ENCODE measurements at regions of chr2 and their contacts with region 1.

Region 1: GRCh38 chr2:88669371-88670214 is 21.9 kb upstream of the RPIA start:
- DNase-seq: peak in 4 of 9 experiments; percentile 12 to 63 (median 34)
- ATAC-seq: peak; percentile 75
- H3K4me3 ChIP-seq: no peak overlapping the region
- H3K4me3 Mint-ChIP-seq: no peak overlapping the region
- H3K27ac ChIP-seq: no peak overlapping the region
- H3K27ac Mint-ChIP-seq: no peak overlapping the region
- H3K4me1 ChIP-seq: no peaks in the 10 kb centered on the region
- H3K4me1 Mint-ChIP-seq: no peaks in the 10 kb centered on the region
- H3K27me3 ChIP-seq: no peaks in the 10 kb centered on the region
- H3K27me3 Mint-ChIP-seq: no peaks in the 10 kb centered on the region
- CTCF ChIP-seq: peak; percentile 40

Region 2: DNA sequence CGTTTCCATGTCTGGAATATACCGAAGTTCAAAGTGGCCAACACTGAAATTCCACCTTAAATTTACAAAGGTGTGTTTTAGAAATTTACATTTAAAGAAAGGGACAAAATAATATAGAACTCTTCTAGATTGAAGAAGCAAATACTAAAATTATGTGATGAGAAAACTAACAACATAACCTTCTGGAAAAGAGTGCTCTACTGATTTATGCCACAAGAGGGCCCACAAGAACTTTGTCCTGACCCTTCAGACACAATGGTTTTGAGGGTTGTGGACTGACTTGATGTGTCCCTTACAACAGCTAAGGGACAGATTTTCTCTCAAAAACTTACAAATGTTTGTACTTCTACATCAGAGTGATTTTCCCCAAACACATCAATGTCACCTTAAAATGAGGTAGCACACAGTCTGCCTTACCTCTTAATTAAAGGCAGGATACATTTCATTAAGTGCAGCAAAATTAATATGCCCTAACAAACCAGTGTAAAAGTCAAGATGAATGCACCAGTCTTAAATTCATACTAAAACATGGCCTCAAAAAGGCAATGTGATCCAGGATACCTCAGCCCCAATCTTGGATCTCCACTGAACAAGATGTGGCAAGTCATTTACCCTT is 78.5 kb before region 1 on chr2:
- CTCF ChIA-PET with region 1: interaction called, 153 read pairs
- POLR2A ChIA-PET with region 1: no interaction called
- intact Hi-C with region 1: loop called (anchors 1 kb)
- DNase-seq: peak in 7 of 9 experiments; percentile 5 to 73 (median 38)
- ATAC-seq: peak; percentile 90
- H3K4me3 ChIP-seq: no peak overlapping the region
- H3K4me3 Mint-ChIP-seq: no peak overlapping the region
- H3K27ac ChIP-seq: no peak overlapping the region
- H3K27ac Mint-ChIP-seq: no peak overlapping the region
- H3K4me1 ChIP-seq: no peaks in the 10 kb centered on the region
- H3K4me1 Mint-ChIP-seq: peaks cover 4% of the 10 kb centered on the region
- H3K27me3 ChIP-seq: no peaks in the 10 kb centered on the region
- H3K27me3 Mint-ChIP-seq: no peaks in the 10 kb centered on the region
- CTCF ChIP-seq: peak; percentile 73

Region 3: GRCh38 chr2:88659538-88659916 is 10.1 kb before region 1 on chr2:
- CTCF ChIA-PET with region 1: interaction called, 26 read pairs
- POLR2A ChIA-PET with region 1: no interaction called
- intact Hi-C with region 1: no loop called
- DNase-seq: no peak
- ATAC-seq: no peak
- H3K4me3 ChIP-seq: no peak overlapping the region
- H3K4me3 Mint-ChIP-seq: no peak overlapping the region
- H3K27ac ChIP-seq: no peak overlapping the region
- H3K27ac Mint-ChIP-seq: no peak overlapping the region
- H3K4me1 ChIP-seq: no peaks in the 10 kb centered on the region
- H3K4me1 Mint-ChIP-seq: no peaks in the 10 kb centered on the region
- H3K27me3 ChIP-seq: no peaks in the 10 kb centered on the region
- H3K27me3 Mint-ChIP-seq: no peaks in the 10 kb centered on the region
- CTCF ChIP-seq: no peak

Region 4: DNA sequence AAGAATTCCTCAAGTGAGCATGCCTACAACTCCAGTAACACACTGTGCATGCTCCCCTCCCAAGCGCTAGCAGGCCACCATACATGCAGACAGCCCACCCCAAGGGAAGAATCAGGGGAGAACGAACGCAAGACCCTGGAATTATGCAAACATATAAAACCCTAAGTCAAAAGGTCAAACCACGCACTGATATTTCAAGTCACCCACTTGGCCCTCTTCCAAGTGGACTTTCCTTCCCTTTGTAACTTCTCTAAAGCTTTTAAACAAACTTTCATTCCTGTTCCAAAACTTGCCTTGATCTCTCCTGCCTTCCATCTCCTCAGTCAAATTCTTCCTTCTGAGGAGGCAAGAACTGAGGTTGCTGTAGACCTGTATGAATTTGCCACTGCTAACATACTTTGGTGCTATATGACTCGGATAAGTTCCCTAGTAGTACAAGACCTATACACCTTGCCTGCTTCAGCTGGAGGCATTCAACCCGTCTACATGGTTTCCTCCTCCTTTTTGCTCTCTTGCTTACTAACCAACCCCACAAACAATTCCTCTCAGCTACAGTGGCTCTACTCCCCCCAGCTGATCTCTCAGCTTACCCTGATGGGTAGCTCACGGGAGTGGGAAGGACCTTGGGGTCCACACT is 10.8 kb after region 1 on chr2:
- CTCF ChIA-PET with region 1: interaction called, 14 read pairs
- POLR2A ChIA-PET with region 1: no interaction called
- intact Hi-C with region 1: no loop called
- DNase-seq: no peak
- ATAC-seq: no peak
- H3K4me3 ChIP-seq: no peak overlapping the region
- H3K4me3 Mint-ChIP-seq: no peak overlapping the region
- H3K27ac ChIP-seq: no peak overlapping the region
- H3K27ac Mint-ChIP-seq: no peak overlapping the region
- H3K4me1 ChIP-seq: no peaks in the 10 kb centered on the region
- H3K4me1 Mint-ChIP-seq: no peaks in the 10 kb centered on the region
- H3K27me3 ChIP-seq: no peaks in the 10 kb centered on the region
- H3K27me3 Mint-ChIP-seq: peaks cover 2% of the 10 kb centered on the region
- CTCF ChIP-seq: no peak

Region 5: DNA sequence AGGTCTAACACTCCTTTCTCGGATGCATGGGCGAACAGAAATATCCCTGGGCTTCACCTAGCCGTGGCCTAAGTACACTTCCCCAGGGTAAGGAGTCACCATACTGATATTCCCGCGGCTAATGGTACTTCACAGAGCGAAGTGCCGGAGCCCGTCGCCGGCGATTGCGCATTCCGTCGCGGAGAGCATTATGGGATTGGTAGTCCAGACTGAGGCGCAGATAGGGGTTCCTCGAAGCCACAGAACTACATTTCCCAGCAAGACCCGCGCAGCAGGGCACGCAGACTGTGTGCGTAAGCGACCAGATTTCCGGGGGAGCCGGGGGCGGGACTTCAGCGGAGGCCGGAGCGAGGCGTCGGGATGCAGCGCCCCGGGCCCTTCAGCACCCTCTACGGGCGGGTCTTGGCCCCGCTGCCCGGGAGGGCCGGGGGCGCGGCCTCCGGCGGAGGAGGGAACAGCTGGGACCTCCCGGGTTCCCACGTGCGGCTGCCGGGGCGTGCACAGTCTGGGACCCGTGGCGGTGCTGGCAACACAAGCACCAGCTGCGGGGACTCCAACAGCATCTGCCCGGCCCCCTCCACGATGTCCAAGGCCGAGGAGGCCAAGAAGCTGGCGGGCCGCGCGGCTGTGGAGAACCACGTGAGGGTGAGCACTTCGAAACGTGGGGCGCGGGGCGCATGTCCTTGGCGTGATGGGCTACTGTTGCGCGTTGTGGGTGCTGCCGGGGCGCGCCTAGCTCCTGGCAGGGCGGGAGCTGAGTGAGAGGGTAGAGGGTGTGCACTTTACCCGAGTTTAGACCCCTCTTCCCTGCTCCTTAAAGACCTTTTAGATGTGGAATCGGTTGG is 22.0 kb after region 1 on chr2 and contains the start of gene RPIA:
- CTCF ChIA-PET with region 1: interaction called, 37 read pairs
- POLR2A ChIA-PET with region 1: no interaction called
- intact Hi-C with region 1: no loop called
- DNase-seq: peak; percentile 97 to 100 (median 99)
- ATAC-seq: peak; percentile 94
- H3K4me3 ChIP-seq: peak within 1 kb of the TSS; percentile 69 to 78
- H3K4me3 Mint-ChIP-seq: peak within 1 kb of the TSS; percentile 91
- H3K27ac ChIP-seq: peak within 1 kb of the TSS; percentile 66 to 80
- H3K27ac Mint-ChIP-seq: peak within 1 kb of the TSS; percentile 92
- H3K4me1 ChIP-seq: peaks cover 25% of the 10 kb centered on the region
- H3K4me1 Mint-ChIP-seq: peaks cover 63% of the 10 kb centered on the region
- H3K27me3 ChIP-seq: no peaks in the 10 kb centered on the region
- H3K27me3 Mint-ChIP-seq: no peaks in the 10 kb centered on the region
- CTCF ChIP-seq: peak; percentile 55
- total RNA-seq, gene RPIA: 26.5 to 27.5 TPM

Region 6: GRCh38 chr2:88753833-88754584 is 84.4 kb after region 1 on chr2:
- CTCF ChIA-PET with region 1: no interaction called
- POLR2A ChIA-PET with region 1: no interaction called
- intact Hi-C with region 1: no loop called
- DNase-seq: peak in 6 of 9 experiments; percentile 9 to 66 (median 36)
- ATAC-seq: peak; percentile 81
- H3K4me3 ChIP-seq: no peak overlapping the region
- H3K4me3 Mint-ChIP-seq: peak overlapping the region; percentile 10
- H3K27ac ChIP-seq: peak overlapping the region; percentile 28 to 51
- H3K27ac Mint-ChIP-seq: peak overlapping the region; percentile 90
- H3K4me1 ChIP-seq: peaks cover 30% of the 10 kb centered on the region
- H3K4me1 Mint-ChIP-seq: peaks cover 51% of the 10 kb centered on the region
- H3K27me3 ChIP-seq: no peaks in the 10 kb centered on the region
- H3K27me3 Mint-ChIP-seq: no peaks in the 10 kb centered on the region
- CTCF ChIP-seq: no peak

Measured in CD8-positive, alpha-beta T cell (primary cell).